Astrocyte of the cerebellum (primary cell): ENCODE measurements at regions of chr16 and their contacts with region 1.

Region 1: DNA sequence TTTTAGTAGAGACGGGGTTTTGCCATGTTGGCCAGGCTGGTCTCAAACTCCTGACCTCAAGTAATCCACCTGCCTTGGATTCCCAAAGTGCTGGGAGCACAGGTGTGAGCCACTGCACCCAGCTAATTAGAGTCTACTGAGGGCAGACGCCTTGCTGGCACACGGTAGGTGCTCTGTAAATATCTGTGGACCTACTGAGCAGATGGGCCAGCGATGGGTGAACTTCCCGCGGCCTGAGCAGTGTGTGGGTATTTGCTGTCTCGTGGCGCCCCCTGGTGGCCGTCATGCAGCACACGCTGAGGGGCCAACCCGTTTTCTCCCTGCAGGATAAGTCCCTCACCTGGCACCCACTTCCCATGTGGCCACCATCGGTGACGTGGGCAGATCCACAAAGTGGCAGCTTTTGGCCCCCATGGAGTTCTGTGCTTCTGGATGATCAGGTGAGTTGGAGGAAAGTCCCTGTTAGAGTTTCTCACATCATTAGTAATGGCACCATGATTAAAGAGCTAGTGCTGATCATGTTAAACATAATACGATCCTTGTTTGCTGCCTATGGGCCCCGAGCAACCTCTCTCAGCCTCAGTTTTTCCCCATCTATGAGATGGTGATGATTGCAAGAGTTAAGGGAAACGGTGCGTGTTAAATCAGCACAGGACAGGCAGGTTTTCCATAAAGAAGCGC is 40.7 kb downstream of the ZDHHC7 start:
- DNase-seq: peak; percentile 41
- H3K4me3 ChIP-seq: no peak overlapping the region
- CTCF ChIP-seq: peak; percentile 88

Region 2: GRCh38 chr16:84754353-84754856 is 216.2 kb before region 1 on chr16:
- in situ Hi-C with region 1: loop called (anchors 10 kb)
- DNase-seq: peak; percentile 88
- H3K4me3 ChIP-seq: no peak overlapping the region
- CTCF ChIP-seq: peak; percentile 71

Region 3: DNA sequence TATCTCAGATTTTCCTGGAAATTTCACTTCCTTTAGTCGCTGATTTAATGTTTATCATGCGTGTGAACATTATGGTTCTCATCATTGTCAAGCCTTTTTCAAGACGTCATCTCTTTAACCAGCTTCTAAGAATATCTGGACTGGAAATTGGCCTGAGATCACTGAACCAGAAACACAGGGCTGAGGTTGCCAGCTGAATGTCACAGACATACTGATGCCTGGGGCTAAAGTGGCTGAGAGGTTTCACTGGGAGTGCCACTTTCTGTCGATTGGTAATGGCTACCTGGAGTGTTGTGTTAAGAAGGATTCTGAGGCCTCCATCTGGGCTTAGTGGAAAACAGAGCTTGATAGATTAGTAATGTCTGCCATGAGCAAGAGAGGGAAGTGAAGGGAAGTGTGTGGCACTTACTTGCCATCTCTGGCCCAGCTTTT is 96.6 kb before region 1 on chr16:
- in situ Hi-C with region 1: no loop called
- DNase-seq: no peak
- H3K4me3 ChIP-seq: no peak overlapping the region
- CTCF ChIP-seq: no peak

Region 4: GRCh38 chr16:85046931-85047866 is 76.6 kb after region 1 on chr16:
- in situ Hi-C with region 1: no loop called
- DNase-seq: no peak
- H3K4me3 ChIP-seq: no peak overlapping the region
- CTCF ChIP-seq: no peak

Region 5: GRCh38 chr16:85503679-85504231 is 533.2 kb after region 1 on chr16:
- in situ Hi-C with region 1: no loop called
- DNase-seq: no peak
- H3K4me3 ChIP-seq: no peak overlapping the region
- CTCF ChIP-seq: no peak